ENCODE measurements at regions of chr11 and their contacts with region 1.

Region 1: GRCh38 chr11:78564490-78565467 is 9.9 kb downstream of the NARS2 start:
- DNase-seq: peak; percentile 71
- H3K4me3 Mint-ChIP-seq: no peak overlapping the region
- H3K27ac Mint-ChIP-seq: no peak overlapping the region
- H3K4me1 Mint-ChIP-seq: peaks cover 22% of the 10 kb centered on the region
- H3K27me3 Mint-ChIP-seq: no peaks in the 10 kb centered on the region
- CTCF ChIP-seq: peak; percentile 71

Region 2: DNA sequence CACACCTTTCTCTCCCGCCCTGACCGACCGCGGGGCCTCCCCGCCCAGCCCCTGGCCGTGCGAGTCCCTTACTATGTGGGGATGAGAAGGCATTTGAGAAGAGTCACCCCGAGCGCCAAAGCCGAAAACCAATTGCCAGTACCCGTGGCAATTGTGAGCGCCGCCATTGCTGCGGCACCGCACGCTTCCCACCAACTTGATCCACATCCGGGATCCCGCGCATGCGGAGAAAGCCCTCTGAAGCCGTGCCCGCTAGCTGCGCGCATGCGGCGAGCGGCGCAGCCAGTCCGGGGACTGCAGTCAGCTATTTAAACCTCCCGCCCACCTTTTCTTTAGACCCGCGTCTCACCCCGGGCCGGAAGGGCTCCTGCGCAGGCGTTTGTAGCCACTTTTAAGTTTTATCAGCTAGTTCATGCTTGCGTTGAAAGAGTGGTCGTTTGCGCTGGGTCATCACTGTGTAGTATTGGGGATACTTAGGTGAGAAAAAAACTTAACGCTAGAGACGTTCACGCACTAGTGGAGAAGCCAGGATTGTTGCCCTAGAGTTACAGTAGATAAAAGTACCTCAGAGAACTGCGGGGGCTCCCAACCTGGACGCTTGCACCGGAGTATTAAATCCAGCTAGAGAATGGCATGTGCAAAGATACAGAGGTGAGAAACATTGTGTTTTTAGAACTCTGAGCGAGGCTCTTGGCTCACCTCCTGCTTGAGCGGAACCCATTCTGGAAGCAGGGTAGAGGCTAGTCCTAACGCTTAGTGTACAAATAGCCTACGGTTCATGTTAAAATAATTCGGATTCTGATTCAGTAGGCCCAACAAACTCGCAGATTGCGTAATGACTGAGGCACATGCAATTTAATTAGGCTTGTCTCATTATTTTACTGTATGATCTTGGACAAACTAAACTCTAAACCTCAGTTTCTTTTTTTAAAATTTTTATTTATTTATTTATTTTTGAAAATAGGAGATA is 425.1 kb before region 1 on chr11 and contains the start of gene ALG8:
- CTCF ChIA-PET with region 1: interaction called, 17 read pairs
- POLR2A ChIA-PET with region 1: interaction called, 5 read pairs
- intact Hi-C with region 1: no loop called
- DNase-seq: peak; percentile 93
- H3K4me3 Mint-ChIP-seq: peak within 1 kb of the TSS; percentile 93
- H3K27ac Mint-ChIP-seq: peak within 1 kb of the TSS; percentile 89
- H3K4me1 Mint-ChIP-seq: peaks cover 17% of the 10 kb centered on the region
- H3K27me3 Mint-ChIP-seq: no peaks in the 10 kb centered on the region
- CTCF ChIP-seq: no peak
- total RNA-seq, gene ALG8: 33.8 and 37.2 TPM in 2 replicates

Region 3: GRCh38 chr11:78216571-78217287 is 348.1 kb before region 1 on chr11:
- CTCF ChIA-PET with region 1: interaction called, 12 read pairs
- POLR2A ChIA-PET with region 1: no interaction called
- intact Hi-C with region 1: no loop called
- DNase-seq: peak; percentile 27
- H3K4me3 Mint-ChIP-seq: no peak overlapping the region
- H3K27ac Mint-ChIP-seq: no peak overlapping the region
- H3K4me1 Mint-ChIP-seq: peaks cover 6% of the 10 kb centered on the region
- H3K27me3 Mint-ChIP-seq: no peaks in the 10 kb centered on the region
- CTCF ChIP-seq: no peak

Region 4: DNA sequence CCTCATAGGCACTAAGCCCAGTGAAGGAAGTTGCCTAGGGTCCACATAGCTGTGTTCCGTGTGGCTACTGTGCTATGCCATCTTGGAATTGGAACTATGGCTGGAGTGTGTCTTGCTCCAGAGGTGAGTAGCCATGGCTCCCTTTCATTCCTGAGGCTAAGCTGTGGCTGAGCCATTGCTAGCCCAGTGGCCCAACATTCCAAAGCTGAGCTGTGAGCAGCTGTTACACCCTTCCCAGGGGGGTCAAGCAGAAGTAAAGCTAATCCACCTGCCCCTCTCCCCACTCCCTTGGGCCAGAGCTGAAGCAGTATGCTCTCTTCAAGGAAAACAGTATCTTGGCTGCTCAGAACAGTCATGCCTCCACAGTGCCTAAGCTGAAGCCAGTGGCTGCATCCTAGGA is 325.0 kb before region 1 on chr11:
- CTCF ChIA-PET with region 1: interaction called, 11 read pairs
- POLR2A ChIA-PET with region 1: no interaction called
- intact Hi-C with region 1: no loop called
- DNase-seq: no peak
- H3K4me3 Mint-ChIP-seq: no peak overlapping the region
- H3K27ac Mint-ChIP-seq: no peak overlapping the region
- H3K4me1 Mint-ChIP-seq: no peaks in the 10 kb centered on the region
- H3K27me3 Mint-ChIP-seq: no peaks in the 10 kb centered on the region
- CTCF ChIP-seq: no peak

Region 5: GRCh38 chr11:78304201-78304600 is 260.6 kb before region 1 on chr11:
- CTCF ChIA-PET with region 1: no interaction called
- POLR2A ChIA-PET with region 1: no interaction called
- intact Hi-C with region 1: no loop called
- DNase-seq: no peak
- H3K4me3 Mint-ChIP-seq: no peak overlapping the region
- H3K27ac Mint-ChIP-seq: no peak overlapping the region
- H3K4me1 Mint-ChIP-seq: no peaks in the 10 kb centered on the region
- H3K27me3 Mint-ChIP-seq: no peaks in the 10 kb centered on the region
- CTCF ChIP-seq: no peak

Region 6: GRCh38 chr11:78432058-78432515 is 132.7 kb before region 1 on chr11:
- CTCF ChIA-PET with region 1: interaction called, 18 read pairs
- POLR2A ChIA-PET with region 1: no interaction called
- intact Hi-C with region 1: loop called (anchors 5 kb)
- DNase-seq: peak; percentile 30
- H3K4me3 Mint-ChIP-seq: no peak overlapping the region
- H3K27ac Mint-ChIP-seq: no peak overlapping the region
- H3K4me1 Mint-ChIP-seq: no peaks in the 10 kb centered on the region
- H3K27me3 Mint-ChIP-seq: no peaks in the 10 kb centered on the region
- CTCF ChIP-seq: peak; percentile 40

Region 7: DNA sequence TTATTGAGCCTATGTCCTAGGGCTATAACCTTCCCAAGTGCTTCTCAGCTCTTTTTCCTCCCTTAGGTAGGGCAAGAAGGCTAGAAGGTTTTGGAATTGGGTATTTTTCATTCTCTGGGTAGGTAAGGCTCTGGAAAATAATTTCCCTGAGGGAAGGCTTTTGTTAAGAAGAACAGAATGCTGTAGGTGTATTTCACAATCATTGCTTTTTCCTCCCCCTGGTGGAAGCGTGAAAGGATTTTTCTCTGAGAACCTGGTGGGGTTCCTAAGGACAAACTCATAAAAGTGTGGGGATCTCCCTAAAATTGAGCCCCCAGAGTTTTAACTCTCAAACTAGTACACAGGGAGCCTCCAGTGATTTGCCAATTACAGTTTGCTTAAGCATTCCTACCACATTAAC is 50.9 kb after region 1 on chr11:
- CTCF ChIA-PET with region 1: no interaction called
- POLR2A ChIA-PET with region 1: no interaction called
- intact Hi-C with region 1: no loop called
- DNase-seq: no peak
- H3K4me3 Mint-ChIP-seq: no peak overlapping the region
- H3K27ac Mint-ChIP-seq: no peak overlapping the region
- H3K4me1 Mint-ChIP-seq: no peaks in the 10 kb centered on the region
- H3K27me3 Mint-ChIP-seq: no peaks in the 10 kb centered on the region
- CTCF ChIP-seq: no peak